ENCODE measurements at regions of chr9 and their contacts with region 1.

Region 1: GRCh38 chr9:28410411-28410810 is 837.1 kb upstream of the C9orf72 start:
- DNase-seq: no peak
- H3K4me3 ChIP-seq: no peak overlapping the region
- CTCF ChIP-seq: no peak
- POLR2A ChIP-seq: no peak

Region 2: GRCh38 chr9:28464481-28465216 is 54.2 kb after region 1 on chr9:
- intact Hi-C with region 1: no loop called
- DNase-seq: no peak
- H3K4me3 ChIP-seq: no peak overlapping the region
- CTCF ChIP-seq: no peak
- POLR2A ChIP-seq: no peak

Region 3: DNA sequence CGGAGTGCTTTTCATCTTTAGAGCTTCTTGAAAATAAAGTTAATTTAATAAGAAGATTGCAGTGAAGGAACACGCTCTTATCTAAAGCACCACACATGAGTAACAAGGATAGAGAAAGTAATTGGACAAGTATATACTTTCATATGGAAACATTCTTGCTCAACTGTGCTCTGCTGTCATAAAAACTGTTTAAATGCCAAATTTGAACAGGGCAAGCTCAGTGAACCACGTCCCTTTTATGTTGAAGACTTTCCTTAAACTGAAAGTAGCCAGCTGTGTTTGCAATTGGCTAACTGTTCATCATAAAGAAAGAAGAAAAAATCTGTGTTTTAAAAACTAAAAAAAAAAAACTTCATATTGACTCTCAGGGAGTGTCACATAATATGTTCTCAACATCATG is 773.6 kb after region 1 on chr9:
- intact Hi-C with region 1: loop called (anchors 5 kb)
- DNase-seq: no peak
- H3K4me3 ChIP-seq: no peak overlapping the region
- CTCF ChIP-seq: no peak
- POLR2A ChIP-seq: no peak